ENCODE measurements at regions of chr14 and their contacts with region 1.

Region 1: GRCh38 chr14:30980980-30981379 is 44.5 kb upstream of the AP4S1 start:
- DNase-seq: no peak
- H3K4me3 ChIP-seq: no peak overlapping the region
- H3K4me3 Mint-ChIP-seq: no peak overlapping the region
- H3K27ac ChIP-seq: no peak overlapping the region
- H3K27ac Mint-ChIP-seq: peak overlapping the region in 5 of 8 donors; percentile 4 to 56 (median 32)
- H3K4me1 ChIP-seq: no peaks in the 10 kb centered on the region
- H3K4me1 Mint-ChIP-seq: peaks cover 22 to 42% (median 33%) of the 10 kb centered on the region in 3 donors
- H3K27me3 ChIP-seq: no peaks in the 10 kb centered on the region
- H3K27me3 Mint-ChIP-seq: no peaks in the 10 kb centered on the region

Region 2: GRCh38 chr14:30431552-30431951 is 549.4 kb before region 1 on chr14:
- CTCF ChIA-PET with region 1: no interaction called
- POLR2A ChIA-PET with region 1: no interaction called
- DNase-seq: no peak
- H3K4me3 ChIP-seq: no peak overlapping the region
- H3K4me3 Mint-ChIP-seq: no peak overlapping the region
- H3K27ac ChIP-seq: no peak overlapping the region
- H3K27ac Mint-ChIP-seq: no peak overlapping the region
- H3K4me1 ChIP-seq: no peaks in the 10 kb centered on the region
- H3K4me1 Mint-ChIP-seq: no peaks in the 10 kb centered on the region
- H3K27me3 ChIP-seq: no peaks in the 10 kb centered on the region
- H3K27me3 Mint-ChIP-seq: peaks cover 0 to 8% of the 10 kb centered on the region in 2 donors

Region 3: DNA sequence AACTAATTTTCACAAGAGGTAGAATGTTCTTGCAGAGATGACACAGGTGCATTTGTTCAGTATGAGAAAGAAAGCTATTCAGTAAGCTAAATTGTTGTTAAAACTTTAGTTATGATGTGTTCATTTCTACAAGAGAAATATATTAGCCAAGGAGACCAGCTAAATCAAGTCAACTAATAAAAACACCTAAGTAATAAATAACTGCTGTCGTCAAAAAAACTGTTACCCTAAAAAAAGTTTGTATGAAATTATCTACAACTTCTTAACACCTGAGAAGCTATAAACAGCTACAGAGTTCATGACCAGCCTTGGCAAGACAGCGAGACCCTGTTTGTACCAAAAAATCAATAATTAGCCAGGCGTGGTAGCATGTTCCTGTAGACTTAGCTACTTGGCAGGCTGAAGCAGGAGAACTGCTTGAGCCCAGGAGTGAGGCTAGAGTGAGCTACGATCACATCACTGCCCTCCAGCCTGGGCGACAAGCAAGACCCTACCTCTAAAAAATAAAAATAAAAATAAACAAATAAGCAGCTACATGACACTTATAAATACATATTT is 23.1 kb before region 1 on chr14:
- CTCF ChIA-PET with region 1: no interaction called
- POLR2A ChIA-PET with region 1: no interaction called
- DNase-seq: no peak
- H3K4me3 ChIP-seq: no peak overlapping the region
- H3K4me3 Mint-ChIP-seq: no peak overlapping the region
- H3K27ac ChIP-seq: no peak overlapping the region
- H3K27ac Mint-ChIP-seq: peak overlapping the region in 2 of 8 donors; percentile 3 to 30
- H3K4me1 ChIP-seq: no peaks in the 10 kb centered on the region
- H3K4me1 Mint-ChIP-seq: peaks cover 25 to 46% (median 33%) of the 10 kb centered on the region in 3 donors
- H3K27me3 ChIP-seq: no peaks in the 10 kb centered on the region
- H3K27me3 Mint-ChIP-seq: no peaks in the 10 kb centered on the region

Region 4: GRCh38 chr14:31026395-31027118 is 45.6 kb after region 1 on chr14:
- CTCF ChIA-PET with region 1: interaction called, 4 read pairs
- POLR2A ChIA-PET with region 1: interaction called, 12 read pairs
- DNase-seq: peak; percentile 82 to 91 (median 85)
- H3K4me3 ChIP-seq: peak overlapping the region; percentile 78
- H3K4me3 Mint-ChIP-seq: peak overlapping the region; percentile 93 to 100 (median 98)
- H3K27ac ChIP-seq: peak overlapping the region; percentile 79
- H3K27ac Mint-ChIP-seq: peak overlapping the region; percentile 88 to 99 (median 98)
- H3K4me1 ChIP-seq: peaks cover 19% of the 10 kb centered on the region
- H3K4me1 Mint-ChIP-seq: peaks cover 44 to 62% (median 50%) of the 10 kb centered on the region in 3 donors
- H3K27me3 ChIP-seq: no peaks in the 10 kb centered on the region
- H3K27me3 Mint-ChIP-seq: no peaks in the 10 kb centered on the region

Region 5: DNA sequence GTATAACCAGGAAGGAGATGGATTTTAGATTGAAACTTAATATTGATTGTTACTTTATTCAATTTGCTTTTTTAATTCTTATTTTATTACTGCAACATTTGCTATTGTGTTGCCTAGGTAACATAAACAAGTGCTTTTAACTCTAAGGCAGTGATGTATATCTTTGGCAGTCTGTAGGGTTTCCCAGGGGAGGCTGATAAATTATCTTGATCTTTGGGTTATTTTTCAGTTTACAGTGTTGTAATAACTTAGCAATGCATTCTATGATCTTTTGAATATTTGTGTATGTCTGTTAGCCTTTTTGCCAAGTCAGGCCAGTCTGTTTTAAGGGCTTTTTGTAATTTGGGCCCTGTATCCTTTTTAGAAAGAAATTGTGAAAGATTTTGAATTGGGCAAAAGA is 484.1 kb after region 1 on chr14:
- CTCF ChIA-PET with region 1: no interaction called
- POLR2A ChIA-PET with region 1: no interaction called
- DNase-seq: no peak
- H3K4me3 ChIP-seq: no peak overlapping the region
- H3K4me3 Mint-ChIP-seq: no peak overlapping the region
- H3K27ac ChIP-seq: no peak overlapping the region
- H3K27ac Mint-ChIP-seq: peak overlapping the region in 1 of 8 donors; percentile 15
- H3K4me1 ChIP-seq: no peaks in the 10 kb centered on the region
- H3K4me1 Mint-ChIP-seq: no peaks in the 10 kb centered on the region
- H3K27me3 ChIP-seq: no peaks in the 10 kb centered on the region
- H3K27me3 Mint-ChIP-seq: peaks cover 0 to 11% of the 10 kb centered on the region in 2 donors